ENCODE measurements at regions of chr3 and their contacts with region 1.

Region 1: GRCh38 chr3:124363476-124363875 is 366.8 kb upstream of the UMPS start:
- DNase-seq: no peak
- H3K4me3 ChIP-seq: no peak overlapping the region
- H3K27ac ChIP-seq: peak overlapping the region in 1 of 4 donors; percentile 12
- H3K4me1 ChIP-seq: peaks cover 0 to 34% (median 5%) of the 10 kb centered on the region in 4 donors
- H3K27me3 ChIP-seq: no peaks in the 10 kb centered on the region
- CTCF ChIP-seq: no peak
- EP300 ChIP-seq: no peak
- POLR2A ChIP-seq: no peak

Region 2: DNA sequence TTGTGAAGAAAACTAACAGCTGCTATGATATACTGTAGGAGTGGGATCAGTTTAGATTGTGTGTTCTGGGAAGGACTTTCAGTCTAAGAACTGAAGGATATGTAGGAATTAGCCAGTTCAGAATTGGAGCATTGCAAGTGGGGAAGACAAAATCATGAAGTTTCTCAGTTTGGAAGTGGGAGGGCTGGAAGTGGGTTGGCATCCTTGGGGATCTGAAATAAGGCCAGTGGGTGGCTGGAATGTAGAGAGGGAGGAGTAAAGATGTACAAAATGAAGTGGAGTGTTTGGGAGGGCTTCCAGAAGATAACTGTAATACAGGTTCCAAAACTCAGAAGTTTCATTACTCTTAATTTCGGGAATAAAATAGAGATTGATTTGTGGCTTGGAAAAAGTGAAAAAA is 1144.5 kb before region 1 on chr3:
- in situ Hi-C with region 1: no loop called
- intact Hi-C with region 1: loop called (anchors 5 kb)
- DNase-seq: no peak
- H3K4me3 ChIP-seq: no peak overlapping the region
- H3K27ac ChIP-seq: no peak overlapping the region
- H3K4me1 ChIP-seq: no peaks in the 10 kb centered on the region
- H3K27me3 ChIP-seq: no peaks in the 10 kb centered on the region
- CTCF ChIP-seq: no peak
- EP300 ChIP-seq: no peak
- POLR2A ChIP-seq: no peak

Region 3: DNA sequence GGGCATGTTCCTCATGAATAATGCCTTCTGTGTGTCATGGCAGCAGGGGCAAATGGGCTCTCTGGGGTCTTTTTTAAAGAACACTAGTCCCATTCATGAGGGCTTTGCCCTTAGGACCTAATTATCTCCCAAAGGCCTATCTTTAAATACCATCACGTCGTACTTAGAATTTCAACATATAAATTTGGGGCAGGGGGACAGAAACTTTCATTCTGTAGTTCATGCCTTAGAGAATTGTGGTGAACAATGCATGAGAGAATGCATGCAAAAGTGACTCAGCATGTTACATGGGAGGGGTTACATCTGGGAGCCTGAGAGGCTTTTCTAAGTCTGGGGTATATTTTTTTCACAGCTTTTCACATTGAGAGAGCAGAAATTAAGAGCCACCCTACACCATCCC is 163.1 kb before region 1 on chr3:
- in situ Hi-C with region 1: no loop called
- intact Hi-C with region 1: no loop called
- DNase-seq: no peak
- H3K4me3 ChIP-seq: no peak overlapping the region
- H3K27ac ChIP-seq: no peak overlapping the region
- H3K4me1 ChIP-seq: peaks cover 3 to 18% (median 5%) of the 10 kb centered on the region in 4 donors
- H3K27me3 ChIP-seq: no peaks in the 10 kb centered on the region
- CTCF ChIP-seq: no peak
- EP300 ChIP-seq: no peak
- POLR2A ChIP-seq: no peak

Region 4: GRCh38 chr3:124607160-124607559 is 243.7 kb after region 1 on chr3:
- in situ Hi-C with region 1: no loop called
- intact Hi-C with region 1: no loop called
- DNase-seq: no peak
- H3K4me3 ChIP-seq: no peak overlapping the region
- H3K27ac ChIP-seq: no peak overlapping the region
- H3K4me1 ChIP-seq: peaks cover 6 to 34% (median 16%) of the 10 kb centered on the region in 4 donors
- H3K27me3 ChIP-seq: no peaks in the 10 kb centered on the region
- CTCF ChIP-seq: no peak
- EP300 ChIP-seq: no peak
- POLR2A ChIP-seq: no peak

Measured in transverse colon (tissue), 4 donors.